ENCODE measurements at regions of chr5 and their contacts with region 1.

Region 1: DNA sequence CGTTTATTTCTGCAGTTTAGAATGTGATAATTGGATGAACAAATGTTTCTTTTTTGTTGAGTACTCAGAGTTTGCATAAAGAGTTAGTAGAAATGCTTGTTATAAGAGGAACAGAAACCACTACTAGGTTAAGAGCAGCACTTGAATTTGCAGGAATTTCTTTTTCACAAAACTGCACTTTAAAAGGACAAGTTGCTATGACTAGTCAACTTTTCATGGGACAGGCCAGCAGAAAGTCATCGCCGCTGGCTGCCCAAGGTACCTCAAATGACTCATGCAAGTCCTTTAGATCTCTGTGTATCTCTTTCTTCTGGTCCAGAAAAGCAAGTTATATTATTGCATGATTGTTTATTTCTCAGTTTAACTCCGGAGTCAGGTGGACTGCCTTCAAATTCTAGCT is 97.3 kb upstream of the HMHB1 start:
- DNase-seq: no peak
- ATAC-seq: no peak
- H3K4me3 Mint-ChIP-seq: no peak overlapping the region
- H3K27ac Mint-ChIP-seq: no peak overlapping the region
- H3K4me1 Mint-ChIP-seq: no peaks in the 10 kb centered on the region
- H3K27me3 Mint-ChIP-seq: no peaks in the 10 kb centered on the region

Region 2: GRCh38 chr5:143760137-143760505 is 45.5 kb after region 1 on chr5:
- CTCF ChIA-PET with region 1: no interaction called
- POLR2A ChIA-PET with region 1: no interaction called
- intact Hi-C with region 1: loop called in 1 of 2 experiments (anchors 5 kb)
- DNase-seq: no peak
- ATAC-seq: peak; percentile 36
- H3K4me3 Mint-ChIP-seq: no peak overlapping the region
- H3K27ac Mint-ChIP-seq: no peak overlapping the region
- H3K4me1 Mint-ChIP-seq: peaks cover 3% of the 10 kb centered on the region
- H3K27me3 Mint-ChIP-seq: peaks cover 4% of the 10 kb centered on the region